HepG2 (cell line): ENCODE measurements at regions of chr10 and their contacts with region 1.

Region 1: GRCh38 chr10:119315128-119316001 is 108.0 kb downstream of the GRK5 start:
- DNase-seq: peak; percentile 83
- ATAC-seq: peak; percentile 21; the same call in 1 of the 3 replicates
- H3K4me3 ChIP-seq: no peak overlapping the region
- H3K27ac ChIP-seq: peak overlapping the region; percentile 95
- H3K4me1 ChIP-seq: peaks cover 82% of the 10 kb centered on the region
- H3K27me3 ChIP-seq: no peaks in the 10 kb centered on the region
- CTCF ChIP-seq: no peak
- EP300 ChIP-seq: peak in 1 of 2 experiments; percentile 10; a peak in 1 of 4 replicates
- POLR2A ChIP-seq: 0 out of 4 replicates have a peak, but pooled peaks of 1 of the 2 experiments have one; percentile 27
- RAD21 ChIP-seq: no peak

Region 2: DNA sequence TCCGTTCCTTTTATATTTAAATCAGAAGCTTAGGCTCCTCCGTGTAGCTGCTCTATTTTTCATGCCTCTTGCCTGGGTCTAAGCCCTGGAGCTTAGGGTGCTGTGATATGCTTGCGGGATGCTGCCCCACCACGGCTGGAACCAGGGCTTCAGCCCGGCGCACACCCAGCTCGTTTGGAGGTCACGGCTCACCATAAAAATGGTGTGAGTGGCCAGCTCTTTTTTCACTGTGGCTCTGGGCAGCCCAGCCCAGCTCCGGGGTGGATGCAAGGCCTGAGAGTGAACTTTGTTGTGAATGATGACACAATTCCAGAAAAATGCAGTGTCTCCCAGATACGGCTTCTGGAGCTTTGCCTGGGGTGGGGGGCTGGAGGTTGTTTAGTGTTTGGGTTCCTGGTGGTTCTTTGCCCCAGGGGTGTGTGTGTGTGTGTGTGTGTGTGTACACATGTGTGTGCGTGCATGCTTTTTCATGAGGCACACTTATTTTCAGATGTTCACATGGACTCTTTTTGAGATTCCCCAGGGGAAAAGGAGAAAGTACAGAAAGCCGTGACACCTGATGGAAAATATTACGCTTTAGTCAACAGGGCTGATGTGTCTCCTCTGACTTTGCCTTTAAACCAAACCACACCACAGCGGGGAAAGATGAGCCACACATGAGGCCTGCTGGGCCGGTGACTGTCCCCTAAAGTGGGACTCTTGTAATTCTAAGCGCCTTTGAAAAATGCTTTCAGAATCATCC is 61.8 kb before region 1 on chr10:
- CTCF ChIA-PET with region 1: no interaction called
- POLR2A ChIA-PET with region 1: interaction called, 59 read pairs
- in situ Hi-C with region 1: no loop called
- intact Hi-C with region 1: no loop called
- DNase-seq: peak; percentile 92
- ATAC-seq: peak; percentile 86
- H3K4me3 ChIP-seq: peak overlapping the region; percentile 39 to 70 (median 51); a peak in 5 of 6 replicates
- H3K27ac ChIP-seq: peak overlapping the region; percentile 90
- H3K4me1 ChIP-seq: peaks cover 74% of the 10 kb centered on the region
- H3K27me3 ChIP-seq: no peaks in the 10 kb centered on the region
- CTCF ChIP-seq: peak; percentile 33
- EP300 ChIP-seq: no peak; a peak in 1 of 4 replicates
- POLR2A ChIP-seq: no peak; a peak in 1 of 4 replicates
- RAD21 ChIP-seq: peak; percentile 41; the same call in 1 of the 2 replicates

Region 3: GRCh38 chr10:119341459-119342301 is 26.3 kb after region 1 on chr10:
- CTCF ChIA-PET with region 1: no interaction called
- POLR2A ChIA-PET with region 1: no interaction called
- in situ Hi-C with region 1: no loop called
- intact Hi-C with region 1: loop called (anchors 2 kb)
- DNase-seq: peak; percentile 72
- ATAC-seq: peak; percentile 85
- H3K4me3 ChIP-seq: peak overlapping the region in 1 of 3 experiments; percentile 40; a peak in 1 of 6 replicates
- H3K27ac ChIP-seq: peak overlapping the region; percentile 69
- H3K4me1 ChIP-seq: peaks cover 49% of the 10 kb centered on the region
- H3K27me3 ChIP-seq: no peaks in the 10 kb centered on the region
- CTCF ChIP-seq: no peak; the same call in 1 of the 2 replicates
- EP300 ChIP-seq: 0 out of 4 replicates have a peak, but pooled peaks of 1 of the 2 experiments have one; percentile 4
- POLR2A ChIP-seq: no peak
- RAD21 ChIP-seq: no peak

Region 4: DNA sequence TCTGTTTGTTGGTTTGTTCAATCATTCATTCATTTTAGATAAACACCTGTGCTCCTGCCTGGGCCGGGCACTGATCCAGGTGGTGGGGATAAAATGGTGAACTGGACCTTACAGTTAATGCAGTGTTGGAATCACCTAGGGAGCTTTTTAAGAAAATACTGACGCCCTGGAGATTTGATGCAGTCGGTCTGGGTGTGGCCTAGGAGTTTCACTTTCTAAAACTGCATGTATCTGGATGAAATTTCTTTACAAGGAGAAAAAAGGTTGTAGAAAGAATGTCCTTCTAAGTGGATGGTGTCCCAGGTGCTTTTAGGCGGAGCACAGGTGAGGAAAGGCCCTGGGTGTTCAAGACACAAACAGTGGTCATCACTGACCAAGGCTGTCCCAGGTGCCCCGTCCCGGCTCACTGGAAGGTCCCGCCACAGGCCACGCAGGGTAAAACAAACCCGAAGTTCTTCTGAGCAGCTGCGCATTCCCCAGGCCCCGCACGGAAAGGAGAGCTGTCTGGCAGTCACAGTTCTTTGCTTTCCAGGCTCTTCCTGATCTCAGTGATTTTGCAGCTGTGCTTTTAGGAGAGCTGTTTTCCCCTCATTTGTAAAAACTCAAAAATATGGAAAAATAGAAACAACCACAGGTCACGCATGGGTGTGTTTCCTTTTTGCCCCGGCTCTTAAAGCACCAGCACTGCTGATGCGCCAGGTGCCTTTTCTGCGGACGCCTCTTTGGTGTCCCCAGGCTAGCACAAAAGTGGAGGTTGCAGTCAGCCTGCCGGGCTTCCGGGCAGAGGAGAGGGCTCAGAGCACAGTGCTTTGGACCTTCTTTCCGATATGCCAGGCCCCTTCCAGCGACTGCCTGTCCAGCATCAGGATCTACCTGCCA is 53.9 kb after region 1 on chr10:
- CTCF ChIA-PET with region 1: no interaction called
- POLR2A ChIA-PET with region 1: no interaction called
- in situ Hi-C with region 1: no loop called
- intact Hi-C with region 1: no loop called
- DNase-seq: no peak
- ATAC-seq: peak; percentile 36
- H3K4me3 ChIP-seq: no peak overlapping the region
- H3K27ac ChIP-seq: no peak overlapping the region
- H3K4me1 ChIP-seq: peaks cover 10% of the 10 kb centered on the region
- H3K27me3 ChIP-seq: no peaks in the 10 kb centered on the region
- CTCF ChIP-seq: no peak
- EP300 ChIP-seq: no peak
- POLR2A ChIP-seq: no peak
- RAD21 ChIP-seq: no peak

Region 5: DNA sequence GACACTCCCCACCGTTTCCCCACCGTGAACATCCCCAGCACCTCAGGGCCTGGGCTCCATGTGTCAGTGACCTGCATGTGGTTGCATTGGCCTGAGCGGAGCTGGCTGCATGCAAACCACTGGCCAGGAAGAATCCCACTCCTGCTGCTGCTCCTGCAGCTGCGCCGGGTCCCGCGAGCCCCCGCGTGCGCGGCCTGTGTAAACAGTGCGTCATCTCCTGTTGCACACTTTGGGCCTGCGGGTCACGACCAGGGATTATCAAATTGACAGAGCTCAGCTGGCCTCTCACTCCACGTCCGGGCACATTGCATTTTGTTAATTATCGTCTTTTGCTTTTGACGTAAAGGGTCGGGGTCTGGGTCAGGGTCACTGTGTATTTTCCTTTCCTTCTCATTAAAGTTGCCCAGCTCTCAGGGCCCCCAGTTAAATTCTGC is 94.5 kb after region 1 on chr10:
- CTCF ChIA-PET with region 1: no interaction called
- POLR2A ChIA-PET with region 1: interaction called, 4 read pairs
- in situ Hi-C with region 1: no loop called
- intact Hi-C with region 1: loop called (anchors 5 kb)
- DNase-seq: peak; percentile 75
- ATAC-seq: peak; percentile 80
- H3K4me3 ChIP-seq: peak overlapping the region in 2 of 3 experiments; percentile 28 to 51; a peak in 3 of 6 replicates
- H3K27ac ChIP-seq: peak overlapping the region; percentile 85
- H3K4me1 ChIP-seq: peaks cover 61% of the 10 kb centered on the region
- H3K27me3 ChIP-seq: no peaks in the 10 kb centered on the region; a peak in 1 of 5 replicates
- CTCF ChIP-seq: no peak
- EP300 ChIP-seq: peak; percentile 39 to 73; a peak in 3 of 4 replicates
- POLR2A ChIP-seq: peak in 1 of 2 experiments; percentile 55; a peak in 2 of 4 replicates
- RAD21 ChIP-seq: no peak

Region 6: DNA sequence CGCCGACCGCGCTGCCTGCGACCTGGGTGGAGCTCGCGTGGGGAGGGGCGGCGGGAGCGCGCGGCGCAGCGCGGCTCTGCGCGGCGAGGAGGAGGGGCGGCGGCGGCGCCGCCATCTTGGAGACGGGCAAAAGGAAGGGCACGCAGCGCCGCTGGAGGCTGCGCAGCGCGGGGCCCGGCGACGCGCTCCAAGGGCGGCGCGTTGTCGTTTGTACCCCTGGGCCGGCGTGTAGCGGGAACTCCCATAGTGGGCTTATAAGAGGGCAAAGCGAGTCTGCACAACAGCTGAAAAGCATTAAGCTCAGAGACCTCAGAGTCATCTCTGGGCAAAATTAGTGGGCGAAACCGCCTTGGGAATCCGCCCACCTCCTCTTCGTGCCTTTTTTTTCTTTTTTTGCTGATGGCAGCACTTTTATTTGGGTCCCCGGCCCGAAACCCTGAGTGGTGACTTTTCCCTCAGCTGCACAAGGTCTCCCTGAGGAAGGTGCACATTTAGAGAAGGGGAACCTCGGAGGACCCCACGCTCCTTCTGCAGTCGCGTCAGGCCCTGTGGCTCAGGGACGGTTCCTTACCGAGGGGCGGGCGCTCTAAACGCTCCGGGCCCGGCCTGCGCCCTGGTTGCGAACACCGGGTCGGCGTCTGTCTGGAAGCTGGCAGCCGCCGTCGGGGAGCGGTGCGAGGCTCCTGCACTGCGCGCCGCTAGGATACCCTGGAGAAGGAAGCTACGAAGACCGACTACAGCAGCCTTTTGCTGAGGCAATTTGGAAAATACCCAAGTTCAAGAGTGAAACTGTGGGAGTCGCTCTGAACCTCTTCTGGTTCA is 557.7 kb after region 1 on chr10:
- CTCF ChIA-PET with region 1: no interaction called
- POLR2A ChIA-PET with region 1: no interaction called
- in situ Hi-C with region 1: no loop called
- intact Hi-C with region 1: loop called (anchors 5 kb)
- DNase-seq: peak; percentile 68
- ATAC-seq: peak; percentile 92
- H3K4me3 ChIP-seq: peak overlapping the region; percentile 79 to 98 (median 85)
- H3K27ac ChIP-seq: peak overlapping the region; percentile 88
- H3K4me1 ChIP-seq: peaks cover 36% of the 10 kb centered on the region
- H3K27me3 ChIP-seq: no peaks in the 10 kb centered on the region; a peak in 1 of 5 replicates
- CTCF ChIP-seq: peak; percentile 17; the same call in 1 of the 2 replicates
- EP300 ChIP-seq: no peak
- POLR2A ChIP-seq: peak; percentile 77 to 78
- RAD21 ChIP-seq: peak; percentile 16; the same call in 1 of the 2 replicates